ENCODE measurements at regions of chr3 and their contacts with region 1.

Region 1: GRCh38 chr3:9396700-9397521 is 504 bp upstream of the SETD5 start:
- DNase-seq: peak; percentile 98 to 100 (median 99)
- ATAC-seq: peak; percentile 82
- H3K4me3 ChIP-seq: peak overlapping the region; percentile 85
- H3K4me3 Mint-ChIP-seq: peak overlapping the region; percentile 89 to 100 (median 96)
- H3K27ac ChIP-seq: peak overlapping the region; percentile 82
- H3K27ac Mint-ChIP-seq: peak overlapping the region; percentile 90 to 100 (median 98)
- H3K4me1 ChIP-seq: peaks cover 46 to 55% of the 10 kb centered on the region in 2 donors
- H3K4me1 Mint-ChIP-seq: peaks cover 59 to 80% (median 75%) of the 10 kb centered on the region in 7 donors
- H3K27me3 ChIP-seq: no peaks in the 10 kb centered on the region
- H3K27me3 Mint-ChIP-seq: peaks cover 0 to 2% (median 0%) of the 10 kb centered on the region in 5 donors

Region 2: GRCh38 chr3:9362731-9363530 is 34.0 kb before region 1 on chr3 and contains the start of gene THUMPD3:
- CTCF ChIA-PET with region 1: interaction called, 10 read pairs
- POLR2A ChIA-PET with region 1: interaction called, 150 read pairs
- intact Hi-C with region 1: loop called (anchors 1 kb)
- DNase-seq: peak; percentile 77 to 97 (median 85)
- ATAC-seq: peak; percentile 94
- H3K4me3 ChIP-seq: peak within 1 kb of the TSS; percentile 99
- H3K4me3 Mint-ChIP-seq: peak within 1 kb of the TSS; percentile 94 to 100 (median 98)
- H3K27ac ChIP-seq: peak within 1 kb of the TSS; percentile 85
- H3K27ac Mint-ChIP-seq: peak within 1 kb of the TSS; percentile 96 to 100 (median 98)
- H3K4me1 ChIP-seq: peaks cover 7 to 14% of the 10 kb centered on the region in 2 donors
- H3K4me1 Mint-ChIP-seq: peaks cover 0 to 44% (median 30%) of the 10 kb centered on the region in 7 donors
- H3K27me3 ChIP-seq: no peaks in the 10 kb centered on the region
- H3K27me3 Mint-ChIP-seq: peaks cover 0 to 3% (median 0%) of the 10 kb centered on the region in 5 donors
- total RNA-seq, gene THUMPD3: 39.4 to 54.8 (median 42.4) TPM

Region 3: DNA sequence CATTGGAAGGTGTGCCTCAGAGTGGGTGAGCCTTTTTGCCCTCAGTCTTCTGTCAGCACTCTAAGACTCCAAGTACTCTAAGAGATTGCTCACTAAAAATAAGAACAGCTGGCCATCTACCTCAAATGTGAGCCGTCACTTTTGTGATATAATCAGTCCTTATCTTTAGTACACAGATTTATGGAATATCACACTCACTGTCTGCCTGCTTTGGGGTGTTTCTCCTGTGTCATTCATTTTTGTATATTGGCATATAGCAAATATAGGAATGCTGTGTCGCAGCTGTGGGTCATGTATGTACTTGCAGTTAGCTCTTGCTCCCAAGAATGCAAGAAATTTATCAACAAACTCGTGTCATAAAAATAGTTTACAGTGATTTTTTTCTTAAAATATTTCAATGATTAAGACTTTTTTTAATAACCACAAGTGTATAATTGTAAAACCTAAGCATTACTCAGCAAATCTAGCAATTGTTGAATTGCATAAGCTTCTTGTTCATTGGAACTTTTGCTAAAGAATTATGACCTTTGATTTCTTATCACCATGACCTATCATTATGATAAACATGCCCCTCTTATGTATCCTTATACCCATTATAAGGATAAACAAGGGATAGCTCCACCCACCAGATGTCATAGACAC is 19.3 kb after region 1 on chr3:
- CTCF ChIA-PET with region 1: interaction called, 3 read pairs
- POLR2A ChIA-PET with region 1: interaction called, 45 read pairs
- intact Hi-C with region 1: loop called in 1 of 2 experiments (anchors 1 kb)
- DNase-seq: no peak
- ATAC-seq: no peak
- H3K4me3 ChIP-seq: no peak overlapping the region
- H3K4me3 Mint-ChIP-seq: peak overlapping the region in 3 of 10 donors; percentile 12 to 37 (median 23)
- H3K27ac ChIP-seq: no peak overlapping the region
- H3K27ac Mint-ChIP-seq: peak overlapping the region in 7 of 9 donors; percentile 42 to 78 (median 63)
- H3K4me1 ChIP-seq: peaks cover 7 to 12% of the 10 kb centered on the region in 2 donors
- H3K4me1 Mint-ChIP-seq: peaks cover 29 to 89% (median 75%) of the 10 kb centered on the region in 7 donors
- H3K27me3 ChIP-seq: no peaks in the 10 kb centered on the region
- H3K27me3 Mint-ChIP-seq: no peaks in the 10 kb centered on the region

Region 4: GRCh38 chr3:9452417-9452816 is 55.5 kb after region 1 on chr3:
- CTCF ChIA-PET with region 1: no interaction called
- POLR2A ChIA-PET with region 1: interaction called, 4 read pairs
- intact Hi-C with region 1: loop called in 1 of 2 experiments (anchors 1 kb)
- DNase-seq: peak in 2 of 9 donors; percentile 0 to 9
- ATAC-seq: no peak
- H3K4me3 ChIP-seq: no peak overlapping the region
- H3K4me3 Mint-ChIP-seq: peak overlapping the region in 3 of 10 donors; percentile 25 to 86 (median 50)
- H3K27ac ChIP-seq: peak overlapping the region; percentile 11
- H3K27ac Mint-ChIP-seq: peak overlapping the region in 8 of 9 donors; percentile 45 to 98 (median 82)
- H3K4me1 ChIP-seq: peaks cover 0 to 3% of the 10 kb centered on the region in 2 donors
- H3K4me1 Mint-ChIP-seq: peaks cover 11 to 34% (median 18%) of the 10 kb centered on the region in 7 donors
- H3K27me3 ChIP-seq: no peaks in the 10 kb centered on the region
- H3K27me3 Mint-ChIP-seq: no peaks in the 10 kb centered on the region

Region 5: DNA sequence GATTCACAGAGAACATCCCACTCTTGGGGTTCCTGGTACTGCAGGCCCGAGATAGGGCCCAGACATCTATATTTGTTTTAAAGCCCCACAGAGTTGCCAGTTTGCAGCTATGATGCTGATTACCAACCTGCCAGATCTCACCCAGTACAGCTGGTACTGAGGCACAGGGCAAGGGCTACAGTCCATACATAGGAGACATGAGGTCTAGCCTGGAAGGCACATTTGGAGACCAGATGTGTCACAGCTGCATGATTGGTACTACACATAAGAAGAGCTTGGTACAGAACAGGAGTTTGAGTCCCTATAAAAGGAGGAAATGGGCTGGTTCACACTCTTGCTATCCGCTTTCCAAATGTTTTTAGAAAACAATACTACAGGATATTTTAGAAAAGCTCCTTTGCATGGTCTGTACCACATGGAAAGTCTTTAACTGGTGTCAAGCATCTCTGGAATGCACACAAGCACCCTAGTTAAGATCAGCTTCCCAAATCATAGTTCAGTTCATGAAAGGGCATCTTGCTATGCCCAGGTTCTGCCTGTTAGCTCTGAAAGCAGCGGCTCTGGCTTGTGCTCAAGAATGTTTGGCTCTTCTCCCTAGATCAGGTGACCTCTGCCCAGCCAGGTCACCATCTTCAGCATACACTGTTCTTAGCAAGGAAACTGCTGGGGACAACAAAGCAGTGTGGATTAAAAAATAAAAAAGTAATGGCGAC is 273.0 kb after region 1 on chr3:
- CTCF ChIA-PET with region 1: no interaction called
- POLR2A ChIA-PET with region 1: no interaction called
- intact Hi-C with region 1: no loop called
- DNase-seq: no peak
- ATAC-seq: no peak
- H3K4me3 ChIP-seq: no peak overlapping the region
- H3K4me3 Mint-ChIP-seq: no peak overlapping the region
- H3K27ac ChIP-seq: no peak overlapping the region
- H3K27ac Mint-ChIP-seq: peak overlapping the region in 2 of 9 donors; percentile 17 to 45
- H3K4me1 ChIP-seq: no peaks in the 10 kb centered on the region
- H3K4me1 Mint-ChIP-seq: peaks cover 0 to 7% (median 0%) of the 10 kb centered on the region in 7 donors
- H3K27me3 ChIP-seq: no peaks in the 10 kb centered on the region
- H3K27me3 Mint-ChIP-seq: no peaks in the 10 kb centered on the region

Region 6: DNA sequence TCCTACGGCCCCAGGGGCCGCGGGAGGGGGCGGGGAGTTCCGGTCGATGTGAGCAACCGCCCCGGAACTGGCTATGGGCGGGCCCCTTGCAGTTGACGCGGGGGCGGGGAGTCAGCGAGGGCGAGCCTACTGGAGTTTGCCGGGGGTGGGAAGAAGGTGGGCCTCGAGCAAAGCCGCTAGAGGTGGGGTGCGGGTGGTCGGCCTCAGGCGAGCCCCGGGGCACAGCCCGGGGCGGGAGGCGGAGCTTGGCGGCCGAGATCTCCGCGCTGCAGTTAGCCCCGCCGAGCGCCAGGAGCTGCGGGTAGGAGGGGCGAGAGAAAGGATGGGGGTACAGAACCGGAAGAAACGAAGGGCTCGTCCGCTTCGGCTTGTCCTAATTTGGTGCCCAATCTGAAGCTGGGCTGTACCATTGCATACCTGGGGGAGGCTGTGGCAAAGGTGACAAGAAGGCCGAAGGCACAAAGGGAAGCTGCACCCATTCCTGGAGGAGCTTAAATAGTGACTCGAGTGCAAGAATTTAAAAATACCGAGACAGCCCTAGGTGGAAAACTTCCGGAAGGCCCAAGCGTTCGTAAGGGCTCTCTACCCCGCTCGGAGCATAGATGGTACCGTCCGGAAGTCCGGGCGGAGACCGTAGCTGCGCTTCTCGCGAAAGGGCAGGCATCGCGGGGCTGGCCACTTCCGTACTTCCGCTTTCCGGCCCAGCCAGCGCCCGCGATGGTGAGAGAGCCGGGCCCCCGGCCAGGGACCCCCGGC is 395.7 kb after region 1 on chr3 and contains the starts of genes ARPC4 and TADA3:
- CTCF ChIA-PET with region 1: interaction called, 3 read pairs
- POLR2A ChIA-PET with region 1: interaction called, 12 read pairs
- intact Hi-C with region 1: loop called (anchors 1 kb)
- DNase-seq: peak; percentile 83 to 96 (median 93)
- ATAC-seq: peak; percentile 92
- H3K4me3 ChIP-seq: peak within 1 kb of the TSS; percentile 81
- H3K4me3 Mint-ChIP-seq: peak within 1 kb of the TSS; percentile 90 to 100 (median 98)
- H3K27ac ChIP-seq: peak within 1 kb of the TSS; percentile 98
- H3K27ac Mint-ChIP-seq: peak within 1 kb of the TSS; percentile 97 to 100 (median 99)
- H3K4me1 ChIP-seq: peaks cover 47% of the 10 kb centered on the region in 2 donors
- H3K4me1 Mint-ChIP-seq: peaks cover 45 to 75% (median 63%) of the 10 kb centered on the region in 7 donors
- H3K27me3 ChIP-seq: no peaks in the 10 kb centered on the region
- H3K27me3 Mint-ChIP-seq: no peaks in the 10 kb centered on the region
- total RNA-seq, gene ARPC4: 128 to 273 (median 129) TPM
- total RNA-seq, gene TADA3: 31.6 to 67.4 (median 36.8) TPM

Region 7: DNA sequence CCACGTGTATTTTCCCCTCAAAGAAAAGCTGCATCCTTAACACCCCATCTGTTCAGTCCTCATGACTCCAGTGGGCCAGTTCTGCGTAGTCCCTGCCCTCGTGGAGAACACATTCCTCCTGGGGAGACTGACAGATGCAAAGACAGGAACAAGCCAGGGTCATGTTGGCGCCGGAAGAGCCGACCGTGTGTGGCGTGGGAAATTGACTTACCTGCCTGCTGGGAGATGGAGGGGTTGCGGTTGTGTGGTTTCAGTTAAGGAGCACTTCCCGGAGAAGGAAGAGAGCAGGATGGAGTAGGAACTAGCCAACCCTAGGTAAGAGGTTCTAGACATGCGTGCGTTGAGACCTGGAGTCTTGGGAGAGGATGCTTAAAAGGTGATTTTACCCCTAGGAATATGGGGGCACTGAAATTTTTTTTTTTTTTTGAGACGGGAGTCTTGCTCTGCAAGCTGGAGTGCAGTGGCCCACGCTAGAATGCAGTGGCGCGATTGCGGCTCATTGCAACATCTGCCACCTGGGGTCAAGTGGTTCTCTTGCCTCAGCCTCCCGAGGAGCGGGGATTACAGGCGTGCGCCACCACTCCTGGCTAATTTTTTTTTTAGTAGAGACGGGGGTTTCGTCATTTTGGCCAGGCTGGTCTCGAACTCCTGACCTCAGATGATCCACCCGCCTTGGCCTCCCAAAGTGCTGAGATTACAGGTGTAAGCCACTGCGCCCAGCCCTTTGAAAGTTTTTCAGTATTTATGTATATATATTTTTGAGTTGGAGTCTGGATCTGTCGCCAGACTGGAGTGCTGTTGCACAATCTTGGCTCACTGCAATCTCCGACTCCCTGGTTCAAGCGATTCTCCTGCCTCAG is 746.0 kb after region 1 on chr3:
- CTCF ChIA-PET with region 1: no interaction called
- POLR2A ChIA-PET with region 1: no interaction called
- intact Hi-C with region 1: loop called in 1 of 2 experiments (anchors 2 kb)
- DNase-seq: peak in 2 of 9 donors; percentile 11 to 12
- ATAC-seq: no peak
- H3K4me3 ChIP-seq: peak overlapping the region; percentile 87
- H3K4me3 Mint-ChIP-seq: peak overlapping the region; percentile 85 to 98 (median 96)
- H3K27ac ChIP-seq: peak overlapping the region; percentile 95
- H3K27ac Mint-ChIP-seq: peak overlapping the region; percentile 38 to 98 (median 94)
- H3K4me1 ChIP-seq: peaks cover 10 to 12% of the 10 kb centered on the region in 2 donors
- H3K4me1 Mint-ChIP-seq: peaks cover 14 to 48% (median 37%) of the 10 kb centered on the region in 7 donors
- H3K27me3 ChIP-seq: no peaks in the 10 kb centered on the region
- H3K27me3 Mint-ChIP-seq: no peaks in the 10 kb centered on the region

Measured in naive thymus-derived CD4-positive, alpha-beta T cell (primary cell).